Mammary epithelial cell (primary cell): ENCODE measurements at regions of chr19 and their contacts with region 1.

Region 1: GRCh38 chr19:43070875-43071274 is 11.6 kb downstream of the PSG2 start:
- DNase-seq: no peak
- H3K4me3 ChIP-seq: no peak overlapping the region
- H3K27ac ChIP-seq: no peak overlapping the region
- H3K4me1 ChIP-seq: no peaks in the 10 kb centered on the region
- H3K27me3 ChIP-seq: no peaks in the 10 kb centered on the region
- CTCF ChIP-seq: no peak

Region 2: GRCh38 chr19:42965176-42965575 is 105.7 kb before region 1 on chr19:
- CTCF ChIA-PET with region 1: no interaction called
- dilution Hi-C with region 1: loop called (anchors 5 kb)
- in situ Hi-C with region 1: no loop called
- intact Hi-C with region 1: no loop called
- DNase-seq: peak; percentile 12
- H3K4me3 ChIP-seq: no peak overlapping the region
- H3K27ac ChIP-seq: peak overlapping the region; percentile 10
- H3K4me1 ChIP-seq: peaks cover 7% of the 10 kb centered on the region
- H3K27me3 ChIP-seq: no peaks in the 10 kb centered on the region
- CTCF ChIP-seq: no peak